GM23248 (cell line): ENCODE measurements at regions of chr20 and their contacts with region 1.

Region 1: GRCh38 chr20:48657475-48658470 is 170.0 kb downstream of the PREX1 start:
- DNase-seq: peak; percentile 81
- H3K4me3 ChIP-seq: no peak overlapping the region
- H3K27ac ChIP-seq: no peak overlapping the region
- H3K4me1 ChIP-seq: no peaks in the 10 kb centered on the region
- H3K27me3 ChIP-seq: no peaks in the 10 kb centered on the region

Region 2: GRCh38 chr20:48904365-48905296 is 246.9 kb after region 1 on chr20:
- in situ Hi-C with region 1: loop called (anchors 5 kb)
- DNase-seq: peak; percentile 79
- H3K4me3 ChIP-seq: no peak overlapping the region
- H3K27ac ChIP-seq: no peak overlapping the region
- H3K4me1 ChIP-seq: no peaks in the 10 kb centered on the region
- H3K27me3 ChIP-seq: peaks cover 25% of the 10 kb centered on the region